MCF 10A (cell line): ENCODE measurements at regions of chr5 and their contacts with region 1.

Region 1: GRCh38 chr5:40841068-40841805 is at the start of gene CARD6:
- DNase-seq: peak; percentile 55
- H3K4me3 Mint-ChIP-seq: peak within 1 kb of the TSS; percentile 80
- H3K27ac Mint-ChIP-seq: peak within 1 kb of the TSS; percentile 94
- H3K4me1 Mint-ChIP-seq: peaks cover 15% of the 10 kb centered on the region
- H3K27me3 Mint-ChIP-seq: no peaks in the 10 kb centered on the region
- CTCF ChIP-seq: no peak
- total RNA-seq, gene CARD6: 5.6 and 6.6 TPM in 2 replicates

Region 2: DNA sequence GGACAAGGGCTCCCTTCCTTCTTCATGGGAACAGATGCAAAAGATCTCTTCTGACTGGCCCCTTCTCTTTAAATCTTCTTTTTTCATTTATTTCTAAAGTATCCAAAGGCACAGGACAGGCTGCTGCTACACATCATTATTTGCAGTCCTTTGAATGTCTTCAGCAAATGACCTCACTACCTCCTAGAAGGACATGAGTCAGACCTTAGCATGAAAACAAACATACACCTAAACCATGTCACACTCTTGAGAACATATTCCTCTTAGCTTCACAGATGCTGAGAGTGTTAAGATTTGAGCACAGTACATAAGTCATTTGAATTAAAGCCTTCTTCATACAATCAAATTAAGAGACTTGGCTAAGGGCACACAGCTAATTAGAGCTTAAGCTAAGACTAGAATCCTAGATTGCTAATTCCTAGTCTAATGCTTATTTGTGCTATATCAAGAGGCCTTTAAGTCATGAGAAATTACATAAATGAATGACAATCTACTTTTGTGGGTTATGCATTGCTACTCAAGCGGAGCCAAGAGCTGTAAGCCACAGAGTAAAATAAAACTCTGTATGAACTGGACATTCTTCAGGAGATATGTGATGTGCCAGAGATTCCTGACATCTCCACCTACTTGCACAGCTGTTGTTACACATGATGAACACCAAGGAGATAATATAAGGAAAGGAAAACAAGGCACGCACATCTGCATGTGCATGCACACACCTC is 270.7 kb before region 1 on chr5:
- CTCF ChIA-PET with region 1: no interaction called
- POLR2A ChIA-PET with region 1: no interaction called
- intact Hi-C with region 1: no loop called
- DNase-seq: peak; percentile 57
- H3K4me3 Mint-ChIP-seq: no peak overlapping the region
- H3K27ac Mint-ChIP-seq: peak overlapping the region; percentile 82
- H3K4me1 Mint-ChIP-seq: peaks cover 21% of the 10 kb centered on the region
- H3K27me3 Mint-ChIP-seq: no peaks in the 10 kb centered on the region
- CTCF ChIP-seq: no peak

Region 3: DNA sequence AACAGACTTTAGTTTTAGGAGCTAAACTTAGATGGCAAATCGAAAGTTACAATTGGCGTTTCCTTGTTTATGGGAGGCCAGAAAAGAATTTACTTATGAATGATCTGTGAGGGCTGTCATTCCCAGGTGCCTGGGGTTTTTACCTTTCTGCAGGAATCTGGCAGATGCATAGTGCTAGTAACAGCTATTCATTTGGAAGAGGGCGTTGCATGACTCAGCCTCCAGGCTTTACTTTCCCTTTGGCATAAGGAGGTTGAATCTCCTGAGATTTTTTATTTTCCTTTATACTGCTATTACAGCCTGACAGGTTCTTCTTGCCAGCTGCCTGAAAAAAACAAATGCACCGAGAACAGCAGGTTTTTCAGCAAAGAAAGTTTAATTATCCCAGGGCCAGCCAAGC is 29.9 kb after region 1 on chr5:
- CTCF ChIA-PET with region 1: interaction called, 4 read pairs
- POLR2A ChIA-PET with region 1: interaction called, 11 read pairs
- intact Hi-C with region 1: no loop called
- DNase-seq: peak; percentile 46
- H3K4me3 Mint-ChIP-seq: no peak overlapping the region
- H3K27ac Mint-ChIP-seq: no peak overlapping the region
- H3K4me1 Mint-ChIP-seq: peaks cover 8% of the 10 kb centered on the region
- H3K27me3 Mint-ChIP-seq: no peaks in the 10 kb centered on the region
- CTCF ChIP-seq: no peak

Region 4: GRCh38 chr5:41368158-41368557 is 526.9 kb after region 1 on chr5:
- CTCF ChIA-PET with region 1: no interaction called
- POLR2A ChIA-PET with region 1: no interaction called
- intact Hi-C with region 1: no loop called
- DNase-seq: no peak
- H3K4me3 Mint-ChIP-seq: no peak overlapping the region
- H3K27ac Mint-ChIP-seq: no peak overlapping the region
- H3K4me1 Mint-ChIP-seq: peaks cover 11% of the 10 kb centered on the region
- H3K27me3 Mint-ChIP-seq: no peaks in the 10 kb centered on the region
- CTCF ChIP-seq: no peak